ENCODE measurements at regions of chr3 and their contacts with region 1.

Region 1: GRCh38 chr3:124837730-124838186 is 49.4 kb downstream of the ITGB5 start:
- DNase-seq: peak; percentile 85
- ATAC-seq: peak; percentile 82
- H3K4me3 ChIP-seq: peak overlapping the region; percentile 35; the same call in 1 of the 2 replicates
- H3K27ac ChIP-seq: peak overlapping the region; percentile 100
- H3K4me1 ChIP-seq: peaks cover 61% of the 10 kb centered on the region
- H3K27me3 ChIP-seq: no peaks in the 10 kb centered on the region
- CTCF ChIP-seq: no peak

Region 2: GRCh38 chr3:124786441-124787241 is 51.1 kb before region 1 on chr3:
- CTCF ChIA-PET with region 1: no interaction called
- POLR2A ChIA-PET with region 1: no interaction called
- intact Hi-C with region 1: loop called (anchors 2 kb)
- DNase-seq: peak; percentile 68
- ATAC-seq: peak; percentile 81
- H3K4me3 ChIP-seq: no peak overlapping the region
- H3K27ac ChIP-seq: peak overlapping the region; percentile 37
- H3K4me1 ChIP-seq: peaks cover 6% of the 10 kb centered on the region
- H3K27me3 ChIP-seq: no peaks in the 10 kb centered on the region
- CTCF ChIP-seq: peak; percentile 66

Region 3: GRCh38 chr3:124812291-124813265 is 25.2 kb before region 1 on chr3:
- CTCF ChIA-PET with region 1: no interaction called
- POLR2A ChIA-PET with region 1: no interaction called
- intact Hi-C with region 1: loop called (anchors 2 kb)
- DNase-seq: peak; percentile 90
- ATAC-seq: peak; percentile 89
- H3K4me3 ChIP-seq: peak overlapping the region; percentile 27; the same call in 1 of the 2 replicates
- H3K27ac ChIP-seq: peak overlapping the region; percentile 82
- H3K4me1 ChIP-seq: peaks cover 51% of the 10 kb centered on the region
- H3K27me3 ChIP-seq: no peaks in the 10 kb centered on the region
- CTCF ChIP-seq: no peak

Region 4: GRCh38 chr3:124887177-124887931 is 49.6 kb after region 1 on chr3 and contains the start of gene ITGB5:
- CTCF ChIA-PET with region 1: no interaction called
- POLR2A ChIA-PET with region 1: no interaction called
- intact Hi-C with region 1: no loop called
- DNase-seq: peak; percentile 70
- ATAC-seq: peak; percentile 67
- H3K4me3 ChIP-seq: peak within 1 kb of the TSS; percentile 83
- H3K27ac ChIP-seq: peak within 1 kb of the TSS; percentile 50
- H3K4me1 ChIP-seq: peaks cover 36% of the 10 kb centered on the region
- H3K27me3 ChIP-seq: no peaks in the 10 kb centered on the region
- CTCF ChIP-seq: no peak
- total RNA-seq, gene ITGB5: 67.2 and 89.4 TPM in 2 replicates